ENCODE measurements at regions of chr14 and their contacts with region 1.

Region 1: DNA sequence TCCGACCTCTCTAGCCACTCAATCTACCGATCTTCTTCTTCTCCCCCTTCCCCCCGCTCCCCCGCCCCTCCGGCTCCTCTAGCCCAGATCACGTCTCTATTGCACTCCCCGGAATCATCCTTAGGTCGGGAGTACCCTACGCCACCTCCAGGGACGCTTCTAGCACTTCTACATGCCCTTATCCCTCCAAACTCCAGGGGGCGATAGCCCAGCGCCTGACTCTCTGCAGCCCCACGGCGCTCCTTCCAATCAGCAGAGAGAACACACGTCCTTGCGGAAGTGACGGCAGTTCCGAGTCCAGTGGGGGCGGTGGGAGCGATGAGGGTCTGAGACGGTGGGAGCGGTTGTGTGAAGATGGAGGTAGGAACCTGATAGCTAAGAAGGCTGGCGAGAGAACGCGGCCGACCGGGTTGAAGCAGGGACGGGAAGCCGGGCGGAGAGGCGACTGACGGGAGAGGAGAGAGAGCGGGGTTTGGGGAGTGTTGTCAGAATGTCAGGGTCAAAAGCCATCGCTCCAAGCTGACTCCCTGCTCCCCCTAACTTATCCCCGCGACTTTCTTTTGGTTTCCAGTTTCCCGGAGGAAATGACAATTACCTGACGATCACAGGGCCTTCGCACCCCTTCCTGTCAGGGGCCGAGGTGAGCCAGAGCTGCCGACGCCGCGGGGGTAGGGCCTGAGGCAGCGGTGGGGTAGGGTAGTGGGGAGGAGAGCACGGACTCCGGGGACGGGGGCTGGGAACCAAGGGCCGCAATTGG is at the starts of genes RAB2B and TOX4:
- DNase-seq: peak; percentile 99
- ATAC-seq: peak; percentile 100
- H3K4me3 ChIP-seq: peak within 1 kb of the TSS; percentile 90
- H3K27ac ChIP-seq: peak within 1 kb of the TSS; percentile 90
- H3K4me1 ChIP-seq: no peaks in the 10 kb centered on the region; the same call in 1 of the 2 replicates
- H3K27me3 ChIP-seq: no peaks in the 10 kb centered on the region
- CTCF ChIP-seq: peak; percentile 100; the same call in 1 of the 2 replicates
- POLR2A ChIP-seq: peak; percentile 95
- RAD21 ChIP-seq: peak; percentile 53; the same call in 1 of the 2 replicates
- total RNA-seq, gene RAB2B: 25.0 and 26.2 TPM in 2 replicates
- total RNA-seq, gene TOX4: 26.7 and 31.7 TPM in 2 replicates

Region 2: GRCh38 chr14:21437063-21437901 is 39.8 kb before region 1 on chr14:
- CTCF ChIA-PET with region 1: no interaction called
- POLR2A ChIA-PET with region 1: no interaction called
- dilution Hi-C with region 1: no loop called
- in situ Hi-C with region 1: no loop called
- intact Hi-C with region 1: loop called (anchors 2 kb)
- DNase-seq: peak; percentile 99
- ATAC-seq: peak; percentile 100
- H3K4me3 ChIP-seq: peak overlapping the region; percentile 90
- H3K27ac ChIP-seq: peak overlapping the region; percentile 90
- H3K4me1 ChIP-seq: peaks cover 5% of the 10 kb centered on the region
- H3K27me3 ChIP-seq: no peaks in the 10 kb centered on the region
- CTCF ChIP-seq: no peak
- POLR2A ChIP-seq: no peak
- RAD21 ChIP-seq: no peak

Region 3: GRCh38 chr14:21768116-21768874 is 291.2 kb after region 1 on chr14:
- CTCF ChIA-PET with region 1: no interaction called
- POLR2A ChIA-PET with region 1: no interaction called
- dilution Hi-C with region 1: no loop called
- in situ Hi-C with region 1: no loop called
- intact Hi-C with region 1: no loop called
- DNase-seq: peak; percentile 1
- ATAC-seq: no peak
- H3K4me3 ChIP-seq: no peak overlapping the region
- H3K27ac ChIP-seq: no peak overlapping the region
- H3K4me1 ChIP-seq: no peaks in the 10 kb centered on the region
- H3K27me3 ChIP-seq: no peaks in the 10 kb centered on the region
- CTCF ChIP-seq: peak; percentile 38
- POLR2A ChIP-seq: no peak
- RAD21 ChIP-seq: no peak

Measured in IMR-90 (cell line).